HEK293 (cell line): ENCODE measurements at regions of chr1 and their contacts with region 1.

Region 1: GRCh38 chr1:43763497-43763973 is 56.2 kb downstream of the ST3GAL3 start:
- H3K4me3 ChIP-seq: no peak overlapping the region
- H3K27ac ChIP-seq: no peak overlapping the region
- H3K4me1 ChIP-seq: no peaks in the 10 kb centered on the region
- CTCF ChIP-seq: peak; percentile 87

Region 2: DNA sequence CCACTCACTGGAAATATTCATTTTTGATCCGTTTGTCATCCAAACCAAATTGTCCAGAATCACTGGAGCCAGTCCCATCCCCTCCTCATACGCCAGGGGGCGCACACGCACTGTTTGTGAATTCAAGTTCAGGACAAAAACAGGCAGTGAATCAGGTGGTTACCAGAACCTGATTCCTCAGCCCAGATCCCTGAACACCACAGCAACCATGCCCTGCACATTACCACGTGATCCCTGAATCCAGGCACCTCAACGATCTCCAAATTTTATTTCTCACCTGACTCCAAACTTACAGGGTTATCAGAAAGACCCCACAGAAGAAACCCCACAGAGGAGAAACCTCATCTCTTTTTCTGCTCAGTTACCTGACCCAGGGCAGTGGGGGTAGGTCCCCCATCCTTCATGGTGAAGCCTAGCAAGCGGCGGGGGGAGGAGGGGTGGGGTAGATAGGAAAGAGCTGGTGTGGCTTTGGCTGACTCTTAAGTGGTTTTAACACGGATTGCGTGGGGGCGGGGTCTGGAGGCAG is 234.3 kb before region 1 on chr1:
- CTCF ChIA-PET with region 1: interaction called, 27 read pairs
- POLR2A ChIA-PET with region 1: no interaction called
- H3K4me3 ChIP-seq: no peak overlapping the region
- H3K27ac ChIP-seq: no peak overlapping the region
- H3K4me1 ChIP-seq: peaks cover 2% of the 10 kb centered on the region; the same call in 1 of the 2 replicates
- CTCF ChIP-seq: peak; percentile 83

Region 3: DNA sequence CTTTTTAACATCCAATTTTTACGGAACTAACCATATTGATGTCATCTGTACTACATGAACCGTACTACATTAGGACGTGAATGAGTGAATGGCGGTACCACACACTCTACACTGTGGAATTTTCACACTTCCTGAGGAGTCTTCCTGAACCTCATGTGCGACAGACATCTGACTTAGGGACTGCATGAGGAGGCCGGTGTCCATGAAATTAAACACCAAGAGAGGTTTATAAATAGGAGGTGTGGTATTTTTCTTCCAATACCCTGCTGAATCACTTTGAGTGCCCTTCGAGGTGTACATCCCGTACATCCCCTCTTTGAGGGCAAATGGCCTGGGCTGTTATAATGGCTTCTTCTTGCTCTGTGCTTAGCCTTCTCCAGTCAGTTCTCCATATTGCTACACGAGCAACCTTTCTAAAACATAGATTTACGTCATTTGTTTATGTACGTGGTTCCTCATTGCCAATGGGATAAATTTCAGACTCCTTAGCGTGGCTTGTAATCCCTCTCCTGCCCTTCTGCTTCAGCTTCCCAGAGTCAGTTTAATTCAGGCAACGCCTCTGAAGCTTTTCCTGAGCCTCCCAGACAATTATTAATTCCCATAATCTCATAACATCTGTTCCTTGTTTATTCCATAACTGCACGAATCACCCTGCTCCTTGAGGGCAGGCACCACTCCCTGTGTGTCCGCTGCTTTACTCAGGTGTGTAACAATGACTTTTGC is 46.8 kb before region 1 on chr1:
- CTCF ChIA-PET with region 1: no interaction called
- POLR2A ChIA-PET with region 1: no interaction called
- H3K4me3 ChIP-seq: no peak overlapping the region
- H3K27ac ChIP-seq: no peak overlapping the region
- H3K4me1 ChIP-seq: peaks cover 3% of the 10 kb centered on the region; the same call in 1 of the 2 replicates
- CTCF ChIP-seq: no peak

Region 4: GRCh38 chr1:43753422-43753821 is 10.1 kb before region 1 on chr1:
- CTCF ChIA-PET with region 1: interaction called, 19 read pairs
- POLR2A ChIA-PET with region 1: no interaction called
- H3K4me3 ChIP-seq: no peak overlapping the region
- H3K27ac ChIP-seq: no peak overlapping the region
- H3K4me1 ChIP-seq: no peaks in the 10 kb centered on the region
- CTCF ChIP-seq: no peak

Region 5: DNA sequence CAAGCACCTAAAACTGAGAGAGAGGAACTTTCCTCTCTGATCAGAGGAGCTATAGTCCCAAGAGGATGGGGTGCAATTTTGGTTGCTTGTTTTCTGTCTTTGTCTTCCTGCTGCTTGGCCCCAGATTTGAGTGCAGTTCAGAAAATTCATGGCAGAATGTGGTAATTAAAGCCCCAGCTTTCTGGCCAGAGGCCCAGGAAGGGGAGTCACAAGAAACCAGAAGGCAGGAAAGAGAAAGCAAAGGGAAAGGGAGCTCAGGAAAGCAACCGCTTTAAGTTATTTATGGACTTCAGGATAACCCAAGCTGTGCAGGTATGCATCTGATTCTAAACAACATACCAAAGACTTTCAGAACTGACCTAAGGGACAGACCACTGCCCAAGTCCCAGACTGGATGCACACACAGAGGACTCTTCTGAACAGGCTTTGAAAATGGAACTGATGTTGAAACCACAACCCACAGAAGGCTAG is 32.6 kb after region 1 on chr1:
- CTCF ChIA-PET with region 1: interaction called, 10 read pairs
- POLR2A ChIA-PET with region 1: no interaction called
- H3K4me3 ChIP-seq: no peak overlapping the region
- H3K27ac ChIP-seq: no peak overlapping the region
- H3K4me1 ChIP-seq: no peaks in the 10 kb centered on the region
- CTCF ChIP-seq: no peak

Region 6: GRCh38 chr1:43946236-43947060 is 182.9 kb after region 1 on chr1 and contains the start of gene IPO13:
- CTCF ChIA-PET with region 1: interaction called, 79 read pairs
- POLR2A ChIA-PET with region 1: interaction called, 3 read pairs
- H3K4me3 ChIP-seq: peak within 1 kb of the TSS; percentile 85
- H3K27ac ChIP-seq: peak within 1 kb of the TSS; percentile 89
- H3K4me1 ChIP-seq: 0 out of 2 replicates have a peak, but pooled peaks cover 4% of the 10 kb centered on the region
- CTCF ChIP-seq: peak; percentile 100

Region 7: GRCh38 chr1:44036409-44037139 is 273.0 kb after region 1 on chr1:
- CTCF ChIA-PET with region 1: interaction called, 23 read pairs
- POLR2A ChIA-PET with region 1: interaction called, 4 read pairs
- H3K4me3 ChIP-seq: no peak overlapping the region
- H3K27ac ChIP-seq: no peak overlapping the region; the same call in 1 of the 2 replicates
- H3K4me1 ChIP-seq: peaks cover 3% of the 10 kb centered on the region; the same call in 1 of the 2 replicates
- CTCF ChIP-seq: peak; percentile 50